ENCODE measurements at regions of chr10 and their contacts with region 1.

Region 1: DNA sequence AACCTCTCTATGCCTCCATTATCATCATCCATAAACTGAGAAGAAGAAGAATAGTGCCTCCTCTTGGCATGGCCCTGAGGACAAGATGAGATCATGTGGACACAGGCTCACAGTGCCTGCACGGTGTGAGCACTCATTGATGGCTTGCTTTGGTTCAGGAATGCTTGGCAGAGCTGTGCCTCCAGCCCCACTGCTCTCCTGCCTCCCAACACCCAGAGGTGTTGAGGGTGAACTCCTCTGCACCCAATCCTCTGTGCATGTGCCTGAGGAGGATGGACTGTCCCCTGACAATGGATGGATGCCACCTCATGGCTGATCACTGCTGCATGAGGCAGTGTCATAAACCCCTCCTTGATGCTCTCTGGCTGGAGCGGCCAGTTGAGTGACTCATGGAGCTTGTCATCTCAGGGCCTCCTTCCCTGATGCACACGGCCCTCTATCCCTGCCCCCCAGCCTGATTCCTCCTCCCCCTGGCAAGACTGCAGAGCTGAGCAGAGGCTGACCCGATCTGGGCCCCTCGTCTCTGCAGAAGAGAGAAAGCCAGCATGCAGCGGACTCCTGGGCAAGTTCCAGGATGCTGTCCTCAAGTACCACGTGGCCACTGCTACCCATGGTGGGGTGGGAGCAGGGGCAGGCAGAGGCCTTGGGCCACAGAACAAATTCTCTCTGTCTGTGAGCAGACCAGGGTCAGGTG is 136.3 kb downstream of the KCNMA1 start:
- DNase-seq: peak; percentile 78
- H3K4me3 ChIP-seq: no peak overlapping the region
- H3K27ac ChIP-seq: peak overlapping the region; percentile 45
- H3K4me1 ChIP-seq: peaks cover 69% of the 10 kb centered on the region
- H3K27me3 ChIP-seq: no peaks in the 10 kb centered on the region
- CTCF ChIP-seq: no peak

Region 2: GRCh38 chr10:77251297-77252013 is 249.8 kb before region 1 on chr10:
- CTCF ChIA-PET with region 1: no interaction called
- dilution Hi-C with region 1: no loop called
- in situ Hi-C with region 1: no loop called
- intact Hi-C with region 1: loop called (anchors 10 kb)
- DNase-seq: peak; percentile 29
- H3K4me3 ChIP-seq: no peak overlapping the region
- H3K27ac ChIP-seq: no peak overlapping the region
- H3K4me1 ChIP-seq: peaks cover 10% of the 10 kb centered on the region
- H3K27me3 ChIP-seq: no peaks in the 10 kb centered on the region
- CTCF ChIP-seq: peak; percentile 67 to 77

Region 3: GRCh38 chr10:77350711-77351119 is 150.6 kb before region 1 on chr10:
- CTCF ChIA-PET with region 1: interaction called, 10 read pairs
- dilution Hi-C with region 1: no loop called
- in situ Hi-C with region 1: no loop called
- intact Hi-C with region 1: no loop called
- DNase-seq: peak; percentile 98
- H3K4me3 ChIP-seq: no peak overlapping the region
- H3K27ac ChIP-seq: peak overlapping the region; percentile 69
- H3K4me1 ChIP-seq: peaks cover 40% of the 10 kb centered on the region
- H3K27me3 ChIP-seq: no peaks in the 10 kb centered on the region
- CTCF ChIP-seq: peak in 1 of 2 donors; percentile 27

Region 4: GRCh38 chr10:77539176-77539935 is 38.1 kb after region 1 on chr10:
- CTCF ChIA-PET with region 1: interaction called, 12 read pairs
- dilution Hi-C with region 1: no loop called
- in situ Hi-C with region 1: no loop called
- intact Hi-C with region 1: no loop called
- DNase-seq: peak; percentile 62
- H3K4me3 ChIP-seq: no peak overlapping the region
- H3K27ac ChIP-seq: no peak overlapping the region
- H3K4me1 ChIP-seq: peaks cover 21% of the 10 kb centered on the region
- H3K27me3 ChIP-seq: no peaks in the 10 kb centered on the region
- CTCF ChIP-seq: no peak

Region 5: GRCh38 chr10:77603534-77603927 is 102.2 kb after region 1 on chr10:
- CTCF ChIA-PET with region 1: interaction called, 11 read pairs
- dilution Hi-C with region 1: no loop called
- in situ Hi-C with region 1: no loop called
- intact Hi-C with region 1: loop called (anchors 5 kb)
- DNase-seq: no peak
- H3K4me3 ChIP-seq: no peak overlapping the region
- H3K27ac ChIP-seq: no peak overlapping the region
- H3K4me1 ChIP-seq: peaks cover 44% of the 10 kb centered on the region
- H3K27me3 ChIP-seq: no peaks in the 10 kb centered on the region
- CTCF ChIP-seq: no peak

Measured in mammary epithelial cell (primary cell).